Mammary epithelial cell (primary cell): ENCODE measurements at regions of chr6 and their contacts with region 1.

Region 1: GRCh38 chr6:163413345-163414116 is 987 bp upstream of the QKI start:
- DNase-seq: peak; percentile 84
- H3K4me3 ChIP-seq: peak overlapping the region; percentile 72 to 90 (median 85)
- H3K27ac ChIP-seq: peak overlapping the region; percentile 77
- H3K4me1 ChIP-seq: no peaks in the 10 kb centered on the region
- H3K27me3 ChIP-seq: no peaks in the 10 kb centered on the region
- CTCF ChIP-seq: no peak

Region 2: GRCh38 chr6:161618831-161619454 is 1794.6 kb before region 1 on chr6:
- CTCF ChIA-PET with region 1: no interaction called
- dilution Hi-C with region 1: no loop called
- in situ Hi-C with region 1: no loop called
- intact Hi-C with region 1: loop called (anchors 2 kb)
- DNase-seq: peak; percentile 35
- H3K4me3 ChIP-seq: peak overlapping the region in 1 of 3 experiments; percentile 14
- H3K27ac ChIP-seq: no peak overlapping the region
- H3K4me1 ChIP-seq: no peaks in the 10 kb centered on the region
- H3K27me3 ChIP-seq: no peaks in the 10 kb centered on the region
- CTCF ChIP-seq: peak; percentile 36 to 70

Region 3: DNA sequence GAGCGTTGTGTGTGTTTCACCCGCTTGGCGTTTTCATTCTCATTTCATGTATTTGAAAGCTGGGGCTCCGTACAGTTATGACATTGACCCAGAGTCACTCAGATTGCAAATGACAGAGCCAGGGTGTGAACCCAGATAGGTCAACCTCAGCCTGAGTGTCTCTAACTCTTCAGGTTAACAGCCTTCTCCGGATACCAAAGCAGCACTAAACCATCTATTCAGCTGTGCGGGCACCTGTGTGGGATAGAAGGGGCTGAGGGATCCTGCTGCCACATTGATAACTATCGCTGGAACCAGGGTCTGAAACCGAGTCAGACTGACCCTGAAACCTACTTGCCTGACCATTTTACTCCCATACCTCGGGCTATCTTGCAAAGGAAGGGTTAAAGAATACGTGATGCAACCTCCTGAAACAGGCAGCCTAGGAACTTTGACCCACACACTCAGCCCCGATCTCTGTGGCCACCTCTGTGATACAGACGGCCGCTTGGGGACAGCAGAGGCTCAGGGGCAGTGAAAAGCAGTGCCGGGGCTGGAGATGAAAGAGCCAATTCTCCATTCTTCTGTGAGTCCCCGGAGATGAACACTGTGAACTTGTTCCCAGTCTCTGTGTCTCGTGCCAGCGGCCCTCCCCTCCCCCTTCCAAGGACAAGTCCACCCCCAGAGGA is 232.5 kb before region 1 on chr6:
- CTCF ChIA-PET with region 1: no interaction called
- dilution Hi-C with region 1: no loop called
- in situ Hi-C with region 1: no loop called
- intact Hi-C with region 1: loop called (anchors 5 kb)
- DNase-seq: peak; percentile 2
- H3K4me3 ChIP-seq: no peak overlapping the region
- H3K27ac ChIP-seq: no peak overlapping the region
- H3K4me1 ChIP-seq: no peaks in the 10 kb centered on the region
- H3K27me3 ChIP-seq: no peaks in the 10 kb centered on the region
- CTCF ChIP-seq: no peak

Region 4: DNA sequence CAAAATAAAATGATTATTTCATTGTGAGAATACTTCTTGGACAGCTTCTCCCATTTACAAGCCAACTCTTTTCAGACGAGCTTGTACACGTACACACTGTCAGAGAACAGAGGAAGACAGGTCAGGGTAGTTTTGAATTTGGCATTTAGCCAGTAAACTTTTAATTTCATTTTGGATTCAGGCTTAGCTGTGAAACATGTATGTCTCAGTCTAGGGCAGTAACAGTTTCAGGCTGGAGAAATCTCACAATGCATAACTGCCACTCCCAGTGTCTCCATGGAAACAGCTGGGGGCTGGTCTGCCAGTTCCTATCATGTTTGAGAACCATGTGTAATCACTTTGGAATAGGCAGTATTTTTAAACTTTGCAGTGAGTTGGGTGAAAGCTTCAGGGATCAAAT is 21.0 kb before region 1 on chr6:
- CTCF ChIA-PET with region 1: no interaction called
- dilution Hi-C with region 1: no loop called
- in situ Hi-C with region 1: no loop called
- intact Hi-C with region 1: loop called (anchors 1 kb)
- DNase-seq: peak; percentile 88
- H3K4me3 ChIP-seq: peak overlapping the region in 2 of 3 experiments; percentile 21 to 29
- H3K27ac ChIP-seq: peak overlapping the region; percentile 87
- H3K4me1 ChIP-seq: peaks cover 16% of the 10 kb centered on the region
- H3K27me3 ChIP-seq: no peaks in the 10 kb centered on the region
- CTCF ChIP-seq: no peak

Region 5: DNA sequence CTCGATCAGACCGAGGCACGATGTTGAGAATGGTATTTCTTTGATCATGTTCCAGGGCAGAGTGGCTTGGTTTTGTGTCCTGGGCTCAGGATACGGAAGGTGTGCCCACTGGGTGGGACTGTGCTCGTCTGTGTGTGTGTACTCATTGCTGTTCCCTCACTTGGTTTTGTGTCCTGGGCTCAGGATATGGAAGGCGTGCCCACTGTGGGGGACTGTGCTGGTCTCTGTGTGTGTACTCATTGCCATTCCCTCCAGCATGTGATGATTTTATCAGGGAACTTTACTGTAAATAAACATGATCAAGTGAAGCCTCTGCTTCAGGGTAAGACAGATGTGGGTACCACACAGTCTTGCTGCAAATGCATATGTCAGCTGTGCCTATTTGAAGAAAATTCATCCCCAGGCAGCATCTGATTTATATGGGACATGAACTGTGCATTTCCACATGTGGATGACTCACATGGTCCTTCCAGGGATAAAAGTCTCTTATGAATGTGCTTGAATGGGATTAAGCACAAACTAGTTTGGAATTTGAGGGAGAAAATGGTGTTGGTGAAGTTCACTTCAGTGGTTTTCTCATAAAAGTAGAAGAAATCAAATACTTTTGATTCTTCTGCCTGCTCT is 275.3 kb after region 1 on chr6:
- CTCF ChIA-PET with region 1: no interaction called
- dilution Hi-C with region 1: no loop called
- in situ Hi-C with region 1: no loop called
- intact Hi-C with region 1: no loop called
- DNase-seq: no peak
- H3K4me3 ChIP-seq: no peak overlapping the region
- H3K27ac ChIP-seq: no peak overlapping the region
- H3K4me1 ChIP-seq: no peaks in the 10 kb centered on the region
- H3K27me3 ChIP-seq: peaks cover 2% of the 10 kb centered on the region
- CTCF ChIP-seq: no peak

Region 6: GRCh38 chr6:164927288-164928056 is 1513.9 kb after region 1 on chr6:
- CTCF ChIA-PET with region 1: no interaction called
- dilution Hi-C with region 1: no loop called
- in situ Hi-C with region 1: no loop called
- intact Hi-C with region 1: loop called (anchors 2 kb)
- DNase-seq: peak; percentile 23
- H3K4me3 ChIP-seq: no peak overlapping the region
- H3K27ac ChIP-seq: no peak overlapping the region
- H3K4me1 ChIP-seq: no peaks in the 10 kb centered on the region
- H3K27me3 ChIP-seq: no peaks in the 10 kb centered on the region
- CTCF ChIP-seq: peak; percentile 82 to 96